PC-9 (cell line): ENCODE measurements at regions of chr3 and their contacts with region 1.

Region 1: DNA sequence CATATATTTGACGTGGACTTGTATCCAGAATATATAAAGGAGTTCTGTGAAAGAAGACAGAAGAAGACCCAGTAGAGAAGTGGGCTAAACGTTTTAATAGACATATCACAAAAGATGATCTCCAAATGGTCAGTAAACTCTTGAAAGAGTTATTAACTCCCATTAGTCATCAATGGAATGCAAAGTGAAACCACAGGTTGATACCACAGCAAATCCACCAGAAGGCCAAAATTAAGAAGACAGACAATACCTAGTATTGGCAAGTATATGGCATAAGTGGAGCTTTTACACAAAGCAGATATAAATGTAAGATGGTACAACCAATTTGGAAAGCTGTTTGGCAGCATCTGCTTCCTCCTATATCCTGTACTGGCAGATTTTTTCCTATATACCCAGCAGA is 6.0 kb downstream of the SPATA16 start:
- DNase-seq: no peak
- H3K4me3 ChIP-seq: no peak overlapping the region
- H3K27ac ChIP-seq: no peak overlapping the region
- H3K4me1 ChIP-seq: no peaks in the 10 kb centered on the region
- H3K27me3 ChIP-seq: no peaks in the 10 kb centered on the region
- CTCF ChIP-seq: no peak

Region 2: GRCh38 chr3:172824229-172824628 is 310.8 kb before region 1 on chr3:
- CTCF ChIA-PET with region 1: no interaction called
- POLR2A ChIA-PET with region 1: no interaction called
- intact Hi-C with region 1: no loop called
- DNase-seq: no peak
- H3K4me3 ChIP-seq: no peak overlapping the region
- H3K27ac ChIP-seq: no peak overlapping the region
- H3K4me1 ChIP-seq: no peaks in the 10 kb centered on the region
- H3K27me3 ChIP-seq: no peaks in the 10 kb centered on the region
- CTCF ChIP-seq: no peak

Region 3: DNA sequence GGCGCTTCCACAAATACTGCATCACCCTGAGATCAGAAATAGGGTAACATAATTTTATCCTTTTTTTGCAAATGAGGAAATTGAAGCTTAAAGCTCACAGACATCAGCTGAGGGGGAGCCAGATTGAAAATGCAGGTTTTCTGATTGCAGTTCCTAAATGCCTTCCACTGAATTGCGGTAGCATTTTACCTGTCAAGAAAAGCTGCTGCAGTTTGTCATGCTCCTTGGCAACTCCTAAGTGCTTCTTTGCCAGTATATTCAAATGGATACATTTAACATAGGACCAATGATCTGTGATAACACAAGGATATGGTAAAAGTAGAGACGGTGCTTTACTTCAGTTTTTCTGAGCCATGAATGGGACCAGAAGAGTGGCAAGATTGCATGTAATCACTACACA is 44.6 kb before region 1 on chr3:
- CTCF ChIA-PET with region 1: no interaction called
- POLR2A ChIA-PET with region 1: no interaction called
- intact Hi-C with region 1: loop called (anchors 1 kb)
- DNase-seq: peak in 1 of 2 experiments; percentile 19
- H3K4me3 ChIP-seq: no peak overlapping the region
- H3K27ac ChIP-seq: no peak overlapping the region
- H3K4me1 ChIP-seq: no peaks in the 10 kb centered on the region
- H3K27me3 ChIP-seq: no peaks in the 10 kb centered on the region
- CTCF ChIP-seq: no peak

Region 4: GRCh38 chr3:173502983-173503568 is 368.0 kb after region 1 on chr3:
- CTCF ChIA-PET with region 1: no interaction called
- POLR2A ChIA-PET with region 1: no interaction called
- intact Hi-C with region 1: no loop called
- DNase-seq: no peak
- H3K4me3 ChIP-seq: no peak overlapping the region
- H3K27ac ChIP-seq: no peak overlapping the region
- H3K4me1 ChIP-seq: no peaks in the 10 kb centered on the region
- H3K27me3 ChIP-seq: no peaks in the 10 kb centered on the region
- CTCF ChIP-seq: no peak

Region 5: GRCh38 chr3:173660645-173661615 is 525.9 kb after region 1 on chr3:
- CTCF ChIA-PET with region 1: no interaction called
- POLR2A ChIA-PET with region 1: no interaction called
- intact Hi-C with region 1: no loop called
- DNase-seq: no peak
- H3K4me3 ChIP-seq: no peak overlapping the region
- H3K27ac ChIP-seq: no peak overlapping the region
- H3K4me1 ChIP-seq: no peaks in the 10 kb centered on the region
- H3K27me3 ChIP-seq: no peaks in the 10 kb centered on the region
- CTCF ChIP-seq: no peak